Ascending aorta (tissue), 2 donors: ENCODE measurements at regions of chr15 and their contacts with region 1.

Region 1: DNA sequence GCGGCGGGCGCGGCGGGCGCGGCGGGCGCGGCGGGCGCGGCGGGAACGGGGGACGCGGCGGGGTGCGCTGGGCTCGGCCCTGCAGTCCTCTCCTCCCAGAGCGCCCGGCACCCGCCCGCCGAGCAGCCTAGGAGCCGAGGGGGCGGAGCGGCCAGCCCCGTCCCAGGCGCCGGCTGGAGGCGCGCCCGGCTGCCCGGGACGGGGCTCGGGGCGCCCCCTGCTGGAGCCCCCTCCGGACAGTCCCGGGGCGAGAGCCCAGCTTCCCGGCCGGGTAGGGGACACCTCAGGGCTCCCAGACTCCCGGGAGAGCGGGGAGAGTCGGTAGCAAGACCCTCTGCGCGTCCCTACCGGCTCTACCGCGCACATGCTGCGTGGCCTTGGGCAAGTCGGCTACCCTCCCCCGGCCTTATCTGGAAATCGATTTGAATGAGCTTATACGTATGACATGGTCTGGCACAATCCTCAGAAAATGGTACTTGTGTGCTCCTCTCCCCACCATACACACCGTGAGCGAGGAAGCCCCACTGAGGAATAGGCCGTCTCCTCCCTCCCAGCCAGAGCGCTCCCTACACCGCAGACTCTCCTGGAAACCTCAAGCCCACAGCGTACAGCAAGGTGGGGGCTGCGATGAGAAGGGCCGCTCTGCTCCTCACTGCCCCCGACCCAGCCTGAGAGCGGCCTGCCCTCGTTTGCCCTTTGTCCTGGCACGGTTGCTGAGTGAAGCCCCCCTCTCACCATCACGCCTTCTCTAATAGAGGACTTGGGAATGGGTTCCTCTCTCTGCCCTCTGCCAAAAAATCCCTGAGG is at the start of gene DAPK2:
- DNase-seq: peak in 1 of 2 donors; percentile 79
- H3K4me3 ChIP-seq: peak within 1 kb of the TSS; percentile 69 to 78
- H3K27ac ChIP-seq: no peak within 1 kb of the TSS
- H3K4me1 ChIP-seq: peaks cover 0 to 8% of the 10 kb centered on the region in 2 donors
- H3K27me3 ChIP-seq: no peaks in the 10 kb centered on the region
- CTCF ChIP-seq: peak; percentile 57 to 88 (median 65)
- total RNA-seq, gene DAPK2: 2.4 TPM

Region 2: DNA sequence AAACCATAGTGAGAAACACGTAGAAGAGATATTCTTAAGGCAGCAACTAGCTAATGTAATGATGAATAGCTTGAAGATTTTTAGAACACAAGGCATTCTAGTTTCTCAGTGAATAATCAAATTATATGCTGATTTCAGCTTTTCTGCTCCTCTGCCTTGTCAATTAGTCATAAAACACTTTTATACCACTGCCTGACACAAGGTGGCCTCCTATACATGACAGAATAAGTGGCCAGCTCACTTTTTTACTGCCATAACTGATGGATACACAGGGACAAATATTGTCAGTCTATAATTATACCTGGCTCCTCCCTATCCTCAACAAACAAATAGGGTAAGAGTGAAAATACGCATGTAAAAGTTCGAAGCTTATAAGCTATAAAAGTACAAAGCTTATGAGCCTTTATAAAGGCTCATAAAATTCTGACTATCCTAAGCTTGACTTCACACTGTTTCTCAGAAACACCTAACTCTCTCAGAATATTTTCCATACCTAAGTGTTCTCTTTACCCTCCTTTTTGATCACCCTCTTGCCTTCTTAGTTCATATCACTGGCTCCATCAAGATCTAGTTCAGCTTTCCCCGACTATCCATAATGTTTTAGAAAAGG is 294.4 kb before region 1 on chr15:
- intact Hi-C with region 1: loop called (anchors 5 kb)
- DNase-seq: no peak
- H3K4me3 ChIP-seq: no peak overlapping the region
- H3K27ac ChIP-seq: no peak overlapping the region
- H3K4me1 ChIP-seq: no peaks in the 10 kb centered on the region
- H3K27me3 ChIP-seq: no peaks in the 10 kb centered on the region
- CTCF ChIP-seq: peak; percentile 46 to 69 (median 68)

Region 3: DNA sequence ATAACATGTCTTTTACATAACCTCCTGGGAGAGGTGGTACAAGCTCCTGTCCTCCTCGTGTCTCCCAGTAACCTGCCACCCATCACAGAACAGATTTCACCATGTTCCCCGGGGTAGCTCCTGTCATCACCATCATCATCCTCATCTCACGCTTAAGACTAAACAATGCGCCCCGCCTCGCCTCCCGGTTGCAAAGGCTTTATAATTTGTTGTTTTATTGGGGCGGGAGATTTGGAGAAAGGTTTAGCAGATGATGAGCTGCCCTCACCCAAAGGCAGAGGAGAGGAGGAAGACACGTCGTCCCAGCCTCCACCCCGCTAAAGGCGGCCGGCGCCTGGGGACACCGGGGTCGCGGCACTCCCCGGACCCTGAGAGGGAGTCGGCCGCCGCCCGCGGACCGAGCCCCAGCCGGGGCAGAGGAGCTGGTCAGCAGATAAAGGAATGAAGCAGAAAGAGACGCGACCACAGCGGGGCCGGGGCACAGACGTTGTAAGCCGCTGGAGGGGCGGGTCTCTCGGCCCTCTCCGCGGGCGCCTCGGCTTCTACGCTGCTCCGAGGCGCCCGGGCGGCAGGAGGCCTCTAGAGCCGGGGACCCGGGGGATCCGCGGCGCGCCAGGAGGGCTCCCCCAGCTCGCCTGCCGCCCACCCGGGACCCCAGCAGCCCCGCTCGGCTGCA is 213.4 kb before region 1 on chr15:
- intact Hi-C with region 1: loop called (anchors 5 kb)
- DNase-seq: peak in 1 of 2 donors; percentile 69
- H3K4me3 ChIP-seq: peak overlapping the region; percentile 81 to 87
- H3K27ac ChIP-seq: peak overlapping the region; percentile 83
- H3K4me1 ChIP-seq: peaks cover 0 to 19% of the 10 kb centered on the region in 2 donors
- H3K27me3 ChIP-seq: no peaks in the 10 kb centered on the region
- CTCF ChIP-seq: no peak

Region 4: DNA sequence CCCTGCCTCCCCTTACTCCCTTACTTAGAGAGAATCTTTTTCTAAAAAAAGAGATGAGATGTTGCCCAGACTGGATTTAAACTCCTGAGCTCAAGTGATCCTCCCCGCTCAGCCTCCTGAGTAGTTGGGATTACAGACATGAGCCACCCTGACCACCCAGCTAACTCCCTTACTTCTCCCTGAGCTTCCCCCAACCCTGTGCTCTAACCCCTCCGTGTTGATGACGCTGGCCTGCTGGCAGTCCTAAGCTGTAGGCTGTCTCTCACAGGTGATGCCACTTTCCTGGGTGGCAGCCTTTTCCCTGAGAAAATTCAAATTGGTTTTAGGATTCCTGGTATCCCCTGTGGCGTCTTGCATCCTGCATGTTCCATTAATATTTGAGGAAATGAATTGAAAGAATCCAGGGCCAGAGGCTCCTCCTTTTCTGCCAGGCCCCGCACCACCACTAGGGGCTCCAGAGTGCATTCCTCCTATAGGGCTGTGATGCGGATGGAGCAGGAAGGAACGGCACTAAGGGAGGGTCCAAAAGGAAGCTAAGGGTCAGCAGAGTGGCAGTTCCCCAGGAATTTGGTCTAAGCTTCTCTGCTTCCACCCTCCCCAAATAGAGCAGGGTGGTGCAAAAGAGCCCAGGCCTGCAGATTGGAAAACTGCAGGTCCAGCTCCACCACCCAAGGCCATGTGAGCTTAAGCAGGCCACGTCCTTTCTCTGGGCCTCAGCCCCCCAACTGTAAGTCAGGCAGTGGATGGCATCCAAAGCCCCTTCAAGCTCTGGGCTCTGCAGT is 101.4 kb before region 1 on chr15:
- intact Hi-C with region 1: loop called (anchors 5 kb)
- DNase-seq: peak in 1 of 2 donors; percentile 78
- H3K4me3 ChIP-seq: no peak overlapping the region
- H3K27ac ChIP-seq: no peak overlapping the region
- H3K4me1 ChIP-seq: peaks cover 1 to 12% of the 10 kb centered on the region in 2 donors
- H3K27me3 ChIP-seq: no peaks in the 10 kb centered on the region
- CTCF ChIP-seq: peak; percentile 66 to 94 (median 91)

Region 5: DNA sequence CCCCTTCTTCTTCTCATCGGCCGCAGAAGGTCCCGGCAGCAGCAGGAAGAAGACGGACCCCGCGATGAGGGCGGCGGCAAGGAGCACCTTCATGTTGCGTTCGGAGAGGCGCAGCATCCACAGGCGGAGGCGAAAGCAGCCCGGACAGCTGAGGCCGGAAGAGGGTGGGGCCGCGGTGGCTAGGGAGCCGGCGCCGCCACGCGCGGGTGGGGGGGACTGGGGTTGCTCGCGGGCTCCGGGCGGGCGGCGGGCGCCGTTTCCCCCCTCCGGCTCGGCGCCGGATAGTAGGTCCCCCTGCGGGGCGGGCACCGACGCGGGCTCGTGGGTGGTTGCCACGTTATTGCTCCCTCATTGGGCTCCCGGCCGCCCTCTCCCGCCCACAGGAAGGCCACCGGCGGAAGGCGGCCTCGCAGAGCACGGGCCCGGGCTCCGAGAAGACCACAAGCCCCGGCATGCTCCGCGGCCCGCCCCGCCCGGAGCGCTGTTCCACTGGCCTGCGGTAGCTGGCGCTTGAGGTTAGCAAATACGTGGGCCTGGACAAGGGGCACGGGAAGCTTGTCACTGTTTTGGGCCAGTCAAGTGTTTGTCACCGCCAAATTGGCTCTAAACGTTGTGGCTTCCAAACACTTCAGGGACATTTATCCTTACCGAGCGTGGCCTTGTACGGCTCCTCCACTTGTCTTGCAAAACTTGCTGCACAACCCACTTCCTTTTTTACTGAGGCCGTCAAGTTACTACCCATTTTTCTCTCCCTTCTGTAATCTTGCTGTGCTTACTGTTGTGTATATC is 116.5 kb after region 1 on chr15 and contains the start of gene PPIB:
- intact Hi-C with region 1: no loop called
- DNase-seq: peak; percentile 94 to 99
- H3K4me3 ChIP-seq: peak within 1 kb of the TSS; percentile 90 to 96
- H3K27ac ChIP-seq: peak within 1 kb of the TSS; percentile 91 to 95
- H3K4me1 ChIP-seq: peaks cover 18 to 22% of the 10 kb centered on the region in 2 donors
- H3K27me3 ChIP-seq: no peaks in the 10 kb centered on the region
- CTCF ChIP-seq: peak; percentile 17 to 58 (median 41)
- total RNA-seq, gene PPIB: 674 TPM